MCF 10A (cell line): ENCODE measurements at regions of chr1 and their contacts with region 1.

Region 1: GRCh38 chr1:41282679-41283317 is 40.7 kb upstream of the SCMH1 start:
- DNase-seq: peak; percentile 31
- H3K4me3 Mint-ChIP-seq: no peak overlapping the region
- H3K27ac Mint-ChIP-seq: no peak overlapping the region
- H3K4me1 Mint-ChIP-seq: peaks cover 5% of the 10 kb centered on the region
- H3K27me3 Mint-ChIP-seq: peaks cover 22% of the 10 kb centered on the region
- CTCF ChIP-seq: peak; percentile 87

Region 2: DNA sequence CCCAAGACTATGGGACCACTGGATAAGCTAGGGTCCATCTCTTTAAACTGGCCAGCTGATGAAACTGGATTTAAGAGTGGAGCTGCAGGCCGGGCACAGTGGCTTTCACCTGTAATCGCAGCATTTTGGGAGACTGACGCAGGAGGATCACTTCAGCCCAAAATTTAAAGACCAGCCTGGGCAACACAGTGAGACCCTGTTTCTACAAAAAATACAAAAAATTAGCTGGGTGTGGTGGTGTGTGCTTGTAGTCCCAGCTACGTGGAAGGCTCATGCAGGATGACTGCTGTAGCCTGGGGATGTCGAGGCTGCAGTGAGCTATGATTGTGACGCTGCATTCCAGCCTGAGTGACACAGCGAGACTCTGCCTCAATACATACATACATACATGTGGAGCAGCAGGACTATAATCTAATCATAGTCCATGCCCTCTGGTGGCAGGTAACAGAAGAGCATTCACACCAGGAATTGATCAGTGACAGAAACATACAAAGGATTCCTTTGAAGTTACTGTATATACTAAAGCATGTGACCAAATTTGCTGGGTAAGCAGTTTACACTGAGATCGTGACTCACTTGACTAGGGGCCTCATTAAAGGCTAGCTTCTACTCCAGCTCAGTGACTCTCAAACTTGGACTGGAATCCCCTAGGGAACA is 159.8 kb before region 1 on chr1:
- CTCF ChIA-PET with region 1: no interaction called
- POLR2A ChIA-PET with region 1: no interaction called
- intact Hi-C with region 1: no loop called
- DNase-seq: peak; percentile 76
- H3K4me3 Mint-ChIP-seq: no peak overlapping the region
- H3K27ac Mint-ChIP-seq: peak overlapping the region; percentile 61
- H3K4me1 Mint-ChIP-seq: peaks cover 15% of the 10 kb centered on the region
- H3K27me3 Mint-ChIP-seq: no peaks in the 10 kb centered on the region
- CTCF ChIP-seq: peak; percentile 42

Region 3: DNA sequence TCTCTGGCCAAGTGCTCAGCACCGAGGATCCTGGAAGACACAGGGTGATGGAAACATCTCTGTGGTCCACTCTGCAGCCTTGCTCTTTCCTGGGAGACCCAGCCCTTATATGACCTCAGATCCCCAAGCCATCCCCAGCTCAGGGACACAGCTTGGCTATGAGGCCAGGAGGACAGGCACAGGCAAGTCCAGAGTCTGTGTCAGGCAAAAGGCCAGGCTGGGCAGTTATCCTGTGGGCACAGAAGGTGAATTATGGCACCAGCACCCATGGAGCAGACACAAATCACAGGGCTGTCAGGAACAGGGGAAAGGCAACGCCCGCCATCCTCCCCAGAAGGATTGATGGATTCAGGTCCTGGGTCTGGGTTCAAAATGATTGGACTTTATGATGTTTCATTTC is 11.4 kb after region 1 on chr1:
- CTCF ChIA-PET with region 1: interaction called, 27 read pairs
- POLR2A ChIA-PET with region 1: interaction called, 3 read pairs
- intact Hi-C with region 1: no loop called
- DNase-seq: peak; percentile 19
- H3K4me3 Mint-ChIP-seq: no peak overlapping the region
- H3K27ac Mint-ChIP-seq: no peak overlapping the region
- H3K4me1 Mint-ChIP-seq: peaks cover 7% of the 10 kb centered on the region
- H3K27me3 Mint-ChIP-seq: peaks cover 27% of the 10 kb centered on the region
- CTCF ChIP-seq: no peak

Region 4: GRCh38 chr1:41328001-41328615 is 45.3 kb after region 1 on chr1:
- CTCF ChIA-PET with region 1: no interaction called
- POLR2A ChIA-PET with region 1: no interaction called
- intact Hi-C with region 1: no loop called
- DNase-seq: no peak
- H3K4me3 Mint-ChIP-seq: no peak overlapping the region
- H3K27ac Mint-ChIP-seq: no peak overlapping the region
- H3K4me1 Mint-ChIP-seq: peaks cover 2% of the 10 kb centered on the region
- H3K27me3 Mint-ChIP-seq: no peaks in the 10 kb centered on the region
- CTCF ChIP-seq: no peak

Region 5: DNA sequence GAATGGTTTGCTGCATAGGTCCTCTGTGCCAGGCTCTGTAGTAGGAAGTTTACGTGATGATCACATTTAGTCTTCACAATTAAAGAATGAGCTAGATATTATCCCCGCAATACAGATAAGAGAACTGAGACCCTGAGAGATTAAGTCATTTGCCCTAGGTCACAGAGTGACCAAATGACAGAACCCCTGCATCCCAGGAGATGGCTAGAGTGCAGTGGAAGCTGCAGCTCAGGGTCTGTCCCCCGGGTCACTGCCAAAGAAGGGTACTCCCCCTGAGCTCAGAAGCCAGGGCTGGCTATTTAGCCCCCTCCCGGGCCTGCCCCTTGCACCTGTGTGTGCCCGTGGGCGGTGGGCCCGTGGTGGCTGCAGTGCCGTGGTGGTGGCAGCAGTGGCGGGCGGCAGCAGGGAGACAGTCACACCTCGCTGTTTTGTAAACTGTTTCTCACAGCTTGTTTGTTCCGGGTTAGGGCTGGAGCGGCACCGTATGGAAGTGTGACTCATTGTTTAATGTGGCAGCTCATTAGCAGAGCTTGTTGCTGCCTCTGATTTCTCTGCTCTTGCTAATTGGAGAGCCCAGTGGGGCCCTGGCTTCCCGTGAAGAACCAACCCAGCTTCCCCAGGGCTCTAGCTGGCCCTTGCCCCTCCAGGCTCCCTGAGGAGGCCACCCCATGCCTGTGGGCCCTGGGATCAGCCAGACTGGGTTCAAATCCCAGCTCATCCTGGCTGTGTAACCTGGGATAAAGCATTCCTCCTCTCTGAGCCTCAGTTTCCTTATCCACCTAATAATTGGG is 59.2 kb after region 1 on chr1:
- CTCF ChIA-PET with region 1: interaction called, 16 read pairs
- POLR2A ChIA-PET with region 1: no interaction called
- intact Hi-C with region 1: no loop called
- DNase-seq: peak; percentile 62
- H3K4me3 Mint-ChIP-seq: no peak overlapping the region
- H3K27ac Mint-ChIP-seq: peak overlapping the region; percentile 2
- H3K4me1 Mint-ChIP-seq: peaks cover 6% of the 10 kb centered on the region
- H3K27me3 Mint-ChIP-seq: no peaks in the 10 kb centered on the region
- CTCF ChIP-seq: no peak

Region 6: GRCh38 chr1:41404308-41404761 is 121.5 kb after region 1 on chr1:
- CTCF ChIA-PET with region 1: interaction called, 12 read pairs
- POLR2A ChIA-PET with region 1: no interaction called
- intact Hi-C with region 1: no loop called
- DNase-seq: peak; percentile 25
- H3K4me3 Mint-ChIP-seq: no peak overlapping the region
- H3K27ac Mint-ChIP-seq: no peak overlapping the region
- H3K4me1 Mint-ChIP-seq: peaks cover 7% of the 10 kb centered on the region
- H3K27me3 Mint-ChIP-seq: peaks cover 20% of the 10 kb centered on the region
- CTCF ChIP-seq: no peak

Region 7: GRCh38 chr1:41432481-41433280 is 149.9 kb after region 1 on chr1:
- CTCF ChIA-PET with region 1: interaction called, 24 read pairs
- POLR2A ChIA-PET with region 1: no interaction called
- intact Hi-C with region 1: loop called (anchors 5 kb)
- DNase-seq: peak; percentile 91
- H3K4me3 Mint-ChIP-seq: peak overlapping the region; percentile 54
- H3K27ac Mint-ChIP-seq: no peak overlapping the region
- H3K4me1 Mint-ChIP-seq: peaks cover 29% of the 10 kb centered on the region
- H3K27me3 Mint-ChIP-seq: no peaks in the 10 kb centered on the region
- CTCF ChIP-seq: peak; percentile 94